Dorsolateral prefrontal cortex (tissue), 120 donors: ENCODE measurements at regions of chr11 and their contacts with region 1.

Region 1: DNA sequence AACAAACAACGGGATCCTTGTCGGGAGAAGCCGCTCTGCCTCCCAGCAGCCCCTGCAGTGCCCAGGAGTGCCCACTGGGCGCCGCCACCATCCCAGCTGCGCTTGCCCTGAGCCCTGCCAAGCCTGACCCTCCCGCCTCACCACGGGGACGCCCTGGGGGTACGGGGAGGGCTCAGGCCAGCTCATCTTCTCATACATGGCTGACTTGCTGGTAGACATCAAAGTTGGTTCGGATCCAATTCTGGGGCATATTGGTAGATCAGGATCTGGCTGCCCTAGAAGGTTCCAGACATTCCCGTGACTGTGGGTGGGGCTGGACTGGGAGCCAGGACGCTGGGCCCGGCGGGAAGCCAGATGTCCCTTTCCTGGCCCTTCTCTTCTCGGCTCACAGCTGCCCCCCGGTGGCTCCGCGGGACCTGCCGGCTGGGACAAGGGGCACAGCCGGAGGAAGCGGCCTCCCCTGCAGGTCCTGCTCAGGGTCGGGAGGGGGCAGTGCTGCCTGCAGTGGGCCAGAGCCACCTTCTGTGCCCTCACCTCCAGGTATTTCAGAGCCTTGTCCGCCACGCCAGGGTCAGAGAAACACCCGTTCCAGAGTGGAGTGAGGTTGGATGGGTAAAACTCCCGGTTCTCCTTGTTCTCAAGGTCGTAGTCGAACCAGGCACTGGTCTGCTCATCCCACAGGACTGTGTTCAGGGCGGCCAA is 10.6 kb upstream of the TREH start:
- DNase-seq: peak; percentile 83 to 96 (median 93)
- H3K4me3 ChIP-seq: peak overlapping the region; percentile 20 to 65 (median 52)
- H3K27ac ChIP-seq: peak overlapping the region; percentile 23 to 98 (median 93)
- H3K27me3 ChIP-seq: no peaks in the 10 kb centered on the region
- CTCF ChIP-seq: peak; percentile 53 to 96 (median 82)

Region 2: DNA sequence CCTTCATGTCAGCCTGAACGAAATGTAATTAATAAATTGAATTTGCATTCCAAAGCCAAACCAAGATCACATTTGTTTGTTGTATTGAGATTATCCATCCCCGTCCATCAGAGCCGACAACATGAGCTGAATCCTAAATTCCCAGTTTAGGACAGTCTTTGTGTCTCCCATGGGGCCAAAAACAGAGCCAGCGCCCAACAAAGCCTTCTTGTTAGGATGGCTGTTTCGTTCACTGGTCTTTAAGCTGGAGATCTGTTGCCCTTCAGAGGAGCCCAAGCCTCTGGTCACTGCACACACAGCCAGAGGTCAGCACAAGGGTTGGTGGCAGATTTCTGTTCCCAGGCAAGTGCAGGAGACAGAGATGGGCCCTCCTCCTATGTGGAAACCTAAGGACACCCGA is 918.8 kb before region 1 on chr11:
- intact Hi-C with region 1: no loop called
- DNase-seq: peak in 8 of 10 donors; percentile 49 to 87 (median 76)
- H3K4me3 ChIP-seq: no peak overlapping the region
- H3K27ac ChIP-seq: peak overlapping the region in 58 of 59 donors; percentile 59 to 97 (median 87)
- H3K27me3 ChIP-seq: no peaks in the 10 kb centered on the region
- CTCF ChIP-seq: peak in 7 of 56 donors; percentile 8 to 34 (median 18)

Region 3: DNA sequence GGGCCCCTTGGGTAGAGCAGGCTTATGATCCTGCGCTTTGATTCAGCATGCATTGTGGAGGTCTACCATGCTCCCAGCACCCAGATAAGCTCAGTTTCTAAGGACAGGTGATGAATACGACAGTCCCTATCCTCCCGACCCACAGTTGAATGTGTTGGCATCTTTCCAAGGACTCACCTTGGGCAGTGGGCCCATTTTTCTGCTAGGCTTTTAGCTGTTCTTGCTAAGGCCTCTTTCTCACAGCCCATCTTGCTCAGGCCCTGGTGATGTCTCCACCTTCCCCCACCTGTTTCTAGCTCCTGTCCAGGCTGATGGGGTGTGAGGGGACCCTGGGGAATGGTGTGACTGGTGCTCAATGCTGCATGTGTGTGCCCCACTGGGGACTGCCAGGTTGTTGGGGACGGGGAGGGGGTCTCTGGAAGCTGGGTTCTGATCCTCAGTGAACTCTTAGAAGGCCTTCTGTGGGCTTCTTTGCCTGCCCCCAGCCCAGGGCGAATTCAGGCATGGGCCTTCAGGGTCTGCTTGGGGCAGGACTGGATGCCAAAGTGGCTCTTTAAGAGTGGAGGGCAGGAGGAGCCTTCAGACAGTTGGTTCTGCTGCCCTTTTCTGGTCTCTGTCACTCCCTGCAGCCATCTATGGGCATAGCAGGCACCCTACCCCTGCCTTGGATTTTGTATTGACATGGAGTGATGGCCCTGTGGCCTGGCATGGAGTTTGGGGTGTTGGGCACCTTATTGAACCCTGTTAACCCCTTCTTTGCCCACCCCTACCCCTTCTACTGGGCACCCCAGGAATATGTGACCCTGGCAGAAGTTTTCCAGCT is 49.5 kb before region 1 on chr11:
- intact Hi-C with region 1: no loop called
- DNase-seq: no peak
- H3K4me3 ChIP-seq: no peak overlapping the region
- H3K27ac ChIP-seq: peak overlapping the region in 34 of 59 donors; percentile 5 to 73 (median 46)
- H3K27me3 ChIP-seq: no peaks in the 10 kb centered on the region
- CTCF ChIP-seq: peak in 17 of 56 donors; percentile 5 to 36 (median 12)

Region 4: GRCh38 chr11:118705111-118705741 is 15.2 kb after region 1 on chr11:
- intact Hi-C with region 1: loop called (anchors 1 to 2 kb)
- DNase-seq: peak in 8 of 10 donors; percentile 37 to 65 (median 56)
- H3K4me3 ChIP-seq: peak overlapping the region in 39 of 59 donors; percentile 0 to 55 (median 22)
- H3K27ac ChIP-seq: peak overlapping the region in 58 of 59 donors; percentile 11 to 92 (median 80)
- H3K27me3 ChIP-seq: no peaks in the 10 kb centered on the region
- CTCF ChIP-seq: peak in 7 of 56 donors; percentile 4 to 27 (median 13)

Region 5: DNA sequence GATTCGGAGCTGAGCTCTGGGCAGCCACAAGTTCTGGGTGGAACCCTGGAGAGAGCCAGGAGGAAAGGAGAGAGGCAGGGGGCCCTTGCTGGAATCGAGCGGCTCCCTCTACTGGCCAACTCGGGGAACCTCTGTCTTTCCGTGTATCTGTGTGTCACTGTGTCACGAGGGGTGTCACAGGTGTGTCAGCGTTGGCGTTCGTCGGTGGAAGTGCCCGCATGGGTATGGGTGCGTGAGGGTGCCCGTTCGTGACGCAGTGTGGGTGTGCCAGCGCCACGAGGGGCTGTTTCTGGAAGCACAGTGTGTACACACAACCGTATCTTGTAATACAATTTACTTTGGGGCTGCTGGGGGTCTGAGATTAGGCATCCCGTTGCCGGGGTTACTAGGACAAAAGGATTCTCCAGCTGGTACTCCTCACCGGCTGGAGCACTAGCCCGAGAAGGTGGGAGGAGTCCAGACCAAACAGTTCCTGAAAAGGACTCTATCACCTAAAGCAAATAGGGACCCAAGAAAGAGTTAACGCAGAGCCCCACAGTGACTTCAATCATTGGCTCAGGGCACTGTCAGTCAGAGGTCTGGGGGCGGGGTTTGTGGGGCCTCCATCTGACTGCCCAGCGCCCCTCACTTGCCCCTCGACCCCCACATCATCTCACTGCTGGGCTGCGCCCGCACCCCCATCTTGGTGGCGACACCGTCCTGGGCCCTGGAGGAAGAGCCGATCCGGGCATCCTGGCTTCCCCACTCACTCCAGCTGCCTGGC is 238.3 kb after region 1 on chr11:
- intact Hi-C with region 1: loop called in 1 of 2 experiments (anchors 5 kb)
- DNase-seq: peak; percentile 84 to 96 (median 92)
- H3K4me3 ChIP-seq: peak overlapping the region; percentile 65 to 100 (median 82)
- H3K27ac ChIP-seq: peak overlapping the region; percentile 83 to 100 (median 98)
- H3K27me3 ChIP-seq: no peaks in the 10 kb centered on the region
- CTCF ChIP-seq: peak; percentile 84 to 98 (median 94)

Region 6: DNA sequence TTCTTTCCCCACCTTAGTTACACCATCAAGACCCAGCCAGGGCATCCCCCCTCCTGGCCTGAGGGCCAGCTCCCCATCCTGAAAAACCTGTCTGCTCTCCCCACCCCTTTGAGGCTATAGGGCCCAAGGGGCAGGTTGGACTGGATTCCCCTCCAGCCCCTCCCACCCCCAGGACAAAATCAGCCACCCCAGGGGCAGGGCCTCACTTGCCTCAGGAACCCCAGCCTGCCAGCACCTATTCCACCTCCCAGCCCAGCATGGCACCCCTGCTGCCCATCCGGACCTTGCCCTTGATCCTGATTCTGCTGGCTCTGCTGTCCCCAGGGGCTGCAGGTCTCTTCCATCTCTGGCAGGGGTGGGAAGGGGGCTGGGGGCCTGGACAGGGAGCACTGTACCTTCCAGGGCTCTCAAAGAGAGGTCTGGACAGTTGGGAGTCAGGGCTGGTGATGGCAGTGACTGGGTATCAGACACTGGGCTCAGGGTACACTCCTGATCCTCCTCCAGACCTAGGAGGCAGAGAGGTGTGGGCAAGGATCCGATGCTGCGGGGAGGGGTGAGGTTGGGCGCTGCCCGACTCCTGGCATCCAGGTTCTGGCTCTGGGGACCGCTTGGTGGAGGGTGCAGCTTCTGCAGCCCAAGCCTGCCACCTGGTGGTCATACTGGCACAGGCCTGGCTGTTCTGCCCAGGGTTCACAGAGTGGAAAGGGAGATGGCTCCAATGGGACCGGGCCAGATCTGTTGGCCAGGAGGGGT is 266.3 kb after region 1 on chr11 and contains the start of gene UPK2:
- intact Hi-C with region 1: loop called (anchors 5 to 10 kb)
- DNase-seq: peak; percentile 85 to 94 (median 92)
- H3K4me3 ChIP-seq: peak within 1 kb of the TSS in 1 of 59 donors; percentile 8
- H3K27ac ChIP-seq: peak within 1 kb of the TSS in 1 of 59 donors; percentile 27
- H3K27me3 ChIP-seq: peaks cover 0 to 2% (median 0%) of the 10 kb centered on the region in 45 donors
- CTCF ChIP-seq: peak; percentile 86 to 99 (median 98)
- total RNA-seq, gene UPK2: 0.43 to 1.2 (median 0.59) TPM in 27 of 120 experiments, not detected in the others